Activated CD8-positive, alpha-beta T cell treated with anti-CD3 and anti-CD28 coated beads, Interleukin-2, amount 10 ng/mL, durations not matched to agents 7 days and 5 days (primary cell): ENCODE measurements at regions of chr12 and their contacts with region 1.

Region 1: DNA sequence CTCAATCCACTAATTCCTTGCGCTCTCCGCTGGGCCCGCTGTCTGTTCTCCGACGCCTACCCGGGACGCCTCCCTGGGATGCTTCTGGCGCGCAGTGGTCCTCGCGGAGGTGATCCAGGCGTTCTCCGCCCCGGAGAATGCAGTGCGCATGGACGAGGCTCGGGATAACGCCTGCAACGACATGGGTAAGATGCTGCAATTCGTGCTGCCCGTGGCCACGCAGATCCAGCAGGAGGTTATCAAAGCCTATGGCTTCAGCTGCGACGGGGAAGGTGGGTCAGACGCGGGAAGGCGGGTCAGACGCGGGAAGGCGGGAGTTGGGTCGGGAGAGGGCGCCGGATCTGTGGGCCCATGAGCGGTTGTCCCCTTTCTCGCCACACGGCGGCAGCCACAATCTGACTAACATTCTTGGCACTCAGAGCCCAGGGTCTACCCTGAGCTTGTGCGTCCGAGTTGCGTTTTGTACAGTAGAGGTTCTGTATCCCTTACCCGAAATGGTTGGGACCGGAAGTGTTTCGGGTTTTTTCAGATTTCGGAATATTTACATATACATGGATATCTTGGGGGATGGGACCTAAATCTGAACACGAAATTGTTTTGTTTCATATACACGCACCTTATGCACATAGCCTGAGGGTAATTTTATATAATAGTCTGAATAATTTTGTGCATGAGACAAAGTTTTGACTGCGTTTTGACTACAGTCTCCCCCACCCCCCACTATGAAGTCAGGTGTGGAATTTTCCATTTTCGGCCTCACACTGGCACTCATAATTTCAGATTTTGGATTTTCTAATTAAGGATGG is 762 bp downstream of the C12orf57 start:
- DNase-seq: peak; percentile 93
- ATAC-seq: peak; percentile 52
- H3K4me3 Mint-ChIP-seq: peak overlapping the region; percentile 88
- H3K27ac Mint-ChIP-seq: peak overlapping the region; percentile 97
- H3K4me1 Mint-ChIP-seq: peaks cover 75% of the 10 kb centered on the region
- H3K27me3 Mint-ChIP-seq: peaks cover 2% of the 10 kb centered on the region

Region 2: GRCh38 chr12:6873094-6874014 is 71.2 kb before region 1 on chr12 and contains the start of gene SPSB2:
- CTCF ChIA-PET with region 1: interaction called, 37 read pairs
- POLR2A ChIA-PET with region 1: interaction called, 41 read pairs
- DNase-seq: peak; percentile 99
- ATAC-seq: peak; percentile 78
- H3K4me3 Mint-ChIP-seq: peak within 1 kb of the TSS; percentile 94
- H3K27ac Mint-ChIP-seq: peak within 1 kb of the TSS; percentile 96
- H3K4me1 Mint-ChIP-seq: peaks cover 56% of the 10 kb centered on the region
- H3K27me3 Mint-ChIP-seq: no peaks in the 10 kb centered on the region
- total RNA-seq, gene SPSB2: 10.0 to 11.2 TPM

Region 3: GRCh38 chr12:6914246-6914946 is 30.2 kb before region 1 on chr12 and contains the start of gene ENO2:
- CTCF ChIA-PET with region 1: interaction called, 5 read pairs
- POLR2A ChIA-PET with region 1: interaction called, 32 read pairs
- DNase-seq: peak; percentile 87
- ATAC-seq: peak; percentile 92
- H3K4me3 Mint-ChIP-seq: peak within 1 kb of the TSS; percentile 92
- H3K27ac Mint-ChIP-seq: peak within 1 kb of the TSS; percentile 84
- H3K4me1 Mint-ChIP-seq: peaks cover 45% of the 10 kb centered on the region
- H3K27me3 Mint-ChIP-seq: peaks cover 5% of the 10 kb centered on the region
- total RNA-seq, gene ENO2: 133 to 141 TPM

Region 4: GRCh38 chr12:6965026-6965661 is 20.6 kb after region 1 on chr12:
- CTCF ChIA-PET with region 1: interaction called, 742 read pairs
- POLR2A ChIA-PET with region 1: interaction called, 1,099 read pairs
- DNase-seq: peak; percentile 93
- ATAC-seq: peak; percentile 65
- H3K4me3 Mint-ChIP-seq: peak overlapping the region; percentile 12
- H3K27ac Mint-ChIP-seq: peak overlapping the region; percentile 77
- H3K4me1 Mint-ChIP-seq: peaks cover 75% of the 10 kb centered on the region
- H3K27me3 Mint-ChIP-seq: no peaks in the 10 kb centered on the region

Region 5: DNA sequence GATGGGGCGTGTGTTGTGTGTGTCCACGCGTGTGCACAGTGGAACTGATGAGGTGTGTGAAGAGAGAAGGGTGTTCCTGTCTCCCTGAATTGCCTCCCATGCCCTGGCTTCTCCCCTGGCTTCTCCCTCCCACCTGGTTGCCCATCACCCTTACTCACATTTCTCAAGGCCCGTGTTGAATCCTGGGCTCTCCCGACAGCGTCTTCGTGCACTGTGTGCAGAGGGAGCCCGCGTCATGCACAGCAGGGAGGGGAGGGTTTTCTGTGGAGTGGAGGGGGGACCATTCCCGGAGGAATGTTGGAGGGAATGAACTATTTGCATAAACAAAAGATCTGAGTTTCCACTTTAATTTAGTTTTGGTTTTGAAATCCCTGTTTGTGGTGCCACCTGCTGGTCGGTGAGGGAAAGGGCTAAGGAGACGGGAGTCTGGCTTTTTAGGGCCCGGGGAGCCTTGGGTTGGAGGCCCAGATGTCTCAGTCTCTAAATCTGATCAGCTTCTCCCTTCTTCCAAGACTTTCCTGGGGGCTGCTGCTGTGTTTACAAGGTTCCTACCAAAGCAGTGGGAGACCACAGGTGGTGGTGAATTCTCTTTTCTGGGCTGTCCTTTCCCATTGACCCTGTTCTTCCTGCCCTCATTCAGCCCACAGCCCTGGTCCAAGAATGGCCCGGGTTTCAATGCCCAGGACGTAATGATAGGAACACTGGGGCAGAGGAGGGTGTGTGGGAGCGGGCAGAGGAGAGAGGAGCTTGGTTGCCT is 147.8 kb after region 1 on chr12 and contains the start of gene C1R:
- CTCF ChIA-PET with region 1: interaction called, 10 read pairs
- POLR2A ChIA-PET with region 1: interaction called, 17 read pairs
- DNase-seq: peak; percentile 81
- ATAC-seq: peak; percentile 71
- H3K4me3 Mint-ChIP-seq: peak within 1 kb of the TSS; percentile 80
- H3K27ac Mint-ChIP-seq: peak within 1 kb of the TSS; percentile 80
- H3K4me1 Mint-ChIP-seq: peaks cover 12% of the 10 kb centered on the region
- H3K27me3 Mint-ChIP-seq: peaks cover 5% of the 10 kb centered on the region
- total RNA-seq, gene C1R: 3.6 to 3.7 TPM